WTC11 (cell line): ENCODE measurements at regions of chr1 and their contacts with region 1.

Region 1: GRCh38 chr1:44368471-44369151 is 13.6 kb upstream of the ERI3 start:
- DNase-seq: peak; percentile 17
- ATAC-seq: peak; percentile 94
- H3K4me3 Mint-ChIP-seq: no peak overlapping the region
- H3K27ac Mint-ChIP-seq: peak overlapping the region; percentile 26; the same call in 1 of the 2 replicates
- H3K4me1 Mint-ChIP-seq: peaks cover 22% of the 10 kb centered on the region
- H3K27me3 Mint-ChIP-seq: peaks cover 26% of the 10 kb centered on the region
- CTCF ChIP-seq: no peak

Region 2: DNA sequence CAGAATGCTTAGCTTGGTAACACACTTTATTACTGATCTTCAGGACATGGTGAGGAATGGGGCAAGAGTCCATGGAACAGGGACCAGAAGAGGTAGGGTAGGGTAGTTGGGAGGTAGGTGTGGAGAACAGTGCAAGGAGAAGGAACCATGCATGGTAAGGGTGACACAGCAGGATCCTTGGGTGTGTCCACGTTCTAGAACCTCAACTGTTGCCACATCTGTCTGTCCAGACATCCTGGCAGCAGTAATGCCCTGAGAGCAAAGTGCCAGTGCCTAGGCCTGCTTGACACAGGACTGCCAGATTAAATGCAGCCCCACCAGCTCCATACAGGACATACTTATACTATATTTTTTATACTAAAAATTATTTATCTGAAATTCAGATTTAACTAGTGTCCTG is 141.4 kb before region 1 on chr1:
- CTCF ChIA-PET with region 1: no interaction called
- POLR2A ChIA-PET with region 1: no interaction called
- DNase-seq: no peak
- ATAC-seq: no peak
- H3K4me3 Mint-ChIP-seq: no peak overlapping the region
- H3K27ac Mint-ChIP-seq: no peak overlapping the region
- H3K4me1 Mint-ChIP-seq: no peaks in the 10 kb centered on the region
- H3K27me3 Mint-ChIP-seq: peaks cover 14% of the 10 kb centered on the region
- CTCF ChIP-seq: no peak

Region 3: GRCh38 chr1:44327679-44328491 is 40.7 kb before region 1 on chr1:
- CTCF ChIA-PET with region 1: no interaction called
- POLR2A ChIA-PET with region 1: interaction called, 13 read pairs
- DNase-seq: peak; percentile 31
- ATAC-seq: peak; percentile 86
- H3K4me3 Mint-ChIP-seq: no peak overlapping the region
- H3K27ac Mint-ChIP-seq: no peak overlapping the region; the same call in 1 of the 2 replicates
- H3K4me1 Mint-ChIP-seq: peaks cover 32% of the 10 kb centered on the region
- H3K27me3 Mint-ChIP-seq: no peaks in the 10 kb centered on the region
- CTCF ChIP-seq: no peak

Region 4: GRCh38 chr1:44354840-44355581 is 13.6 kb before region 1 on chr1 and contains the start of gene ERI3:
- CTCF ChIA-PET with region 1: no interaction called
- POLR2A ChIA-PET with region 1: no interaction called
- DNase-seq: peak; percentile 97
- ATAC-seq: peak; percentile 99
- H3K4me3 Mint-ChIP-seq: peak within 1 kb of the TSS; percentile 79
- H3K27ac Mint-ChIP-seq: peak within 1 kb of the TSS; percentile 76
- H3K4me1 Mint-ChIP-seq: peaks cover 44% of the 10 kb centered on the region
- H3K27me3 Mint-ChIP-seq: peaks cover 3% of the 10 kb centered on the region; the same call in 1 of the 2 replicates
- CTCF ChIP-seq: no peak
- total RNA-seq, gene ERI3: 74.7 to 76.1 TPM (median 75.2 TPM) in 3 replicates